AG04449 (cell line): ENCODE measurements at regions of chr10 and their contacts with region 1.

Region 1: GRCh38 chr10:23994479-23995046 is 214.4 kb upstream of the KIAA1217 start:
- DNase-seq: peak; percentile 7
- H3K4me3 ChIP-seq: no peak overlapping the region
- CTCF ChIP-seq: peak; percentile 86

Region 2: GRCh38 chr10:23981520-23982309 is 12.8 kb before region 1 on chr10:
- CTCF ChIA-PET with region 1: interaction called, 20 read pairs
- POLR2A ChIA-PET with region 1: no interaction called
- DNase-seq: no peak
- H3K4me3 ChIP-seq: no peak overlapping the region
- CTCF ChIP-seq: no peak

Region 3: DNA sequence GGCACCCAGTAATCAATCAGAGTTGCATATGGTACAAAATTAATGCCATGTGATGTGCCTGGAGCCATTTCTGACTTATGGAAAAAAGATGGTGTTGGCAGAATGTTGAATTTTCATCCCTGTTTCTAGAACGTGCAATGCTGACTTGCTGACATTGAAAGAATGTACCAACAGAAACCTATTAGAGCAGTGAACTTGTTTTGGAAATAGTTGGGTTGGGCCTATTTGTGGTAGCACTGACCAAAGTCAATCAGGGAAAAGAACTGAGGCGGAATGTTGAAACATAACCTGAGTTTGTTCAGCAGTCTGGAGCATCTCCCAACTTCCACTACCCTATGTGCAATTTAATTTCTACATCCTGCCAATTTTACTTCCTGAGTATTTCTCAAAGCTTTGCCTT is 202.7 kb after region 1 on chr10:
- CTCF ChIA-PET with region 1: interaction called, 89 read pairs
- POLR2A ChIA-PET with region 1: no interaction called
- DNase-seq: no peak
- H3K4me3 ChIP-seq: no peak overlapping the region
- CTCF ChIP-seq: no peak

Region 4: DNA sequence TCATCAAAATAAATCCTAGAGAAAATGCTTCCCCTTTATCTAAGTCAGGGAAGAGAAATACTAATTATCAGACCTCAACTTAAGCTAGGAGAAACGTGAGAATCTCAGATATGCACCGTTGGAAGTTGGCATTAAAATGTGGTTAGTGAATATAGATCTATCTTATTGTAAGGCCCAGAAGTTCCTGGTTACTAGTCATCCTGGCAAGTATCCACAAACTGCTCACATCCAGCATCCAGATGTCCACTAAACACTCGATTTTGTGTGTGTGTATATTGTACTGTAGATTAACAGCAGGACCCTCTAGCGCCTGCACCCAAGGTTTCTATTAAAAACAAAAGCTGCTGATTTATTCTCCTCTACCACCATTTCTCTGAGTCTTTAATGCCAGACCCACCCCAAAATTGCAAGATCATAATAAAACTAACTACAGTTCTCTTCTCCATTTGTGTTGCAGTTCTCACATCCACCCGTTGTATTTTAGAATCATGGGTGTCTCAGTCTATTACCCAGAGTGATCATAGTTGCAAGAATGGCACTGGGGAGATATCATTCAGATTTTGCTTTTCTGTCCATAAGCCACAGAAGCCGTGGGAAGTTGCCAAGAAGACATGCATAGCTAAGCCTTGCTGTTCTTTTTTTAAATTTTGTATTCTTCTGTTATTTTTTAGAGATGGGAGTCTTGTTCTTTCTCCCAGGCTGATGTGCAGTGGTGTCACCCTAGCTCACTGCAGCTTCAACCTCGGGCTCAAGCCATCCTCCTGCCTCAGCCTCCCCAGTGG is 379.8 kb after region 1 on chr10:
- CTCF ChIA-PET with region 1: interaction called, 12 read pairs
- POLR2A ChIA-PET with region 1: no interaction called
- DNase-seq: peak; percentile 71
- H3K4me3 ChIP-seq: no peak overlapping the region
- CTCF ChIP-seq: no peak

Region 5: GRCh38 chr10:24503461-24504320 is 509.1 kb after region 1 on chr10:
- CTCF ChIA-PET with region 1: interaction called, 45 read pairs
- POLR2A ChIA-PET with region 1: no interaction called
- DNase-seq: no peak
- H3K4me3 ChIP-seq: no peak overlapping the region
- CTCF ChIP-seq: peak; percentile 49

Region 6: GRCh38 chr10:24528946-24529345 is 534.4 kb after region 1 on chr10:
- CTCF ChIA-PET with region 1: interaction called, 11 read pairs
- POLR2A ChIA-PET with region 1: no interaction called
- DNase-seq: no peak
- H3K4me3 ChIP-seq: no peak overlapping the region
- CTCF ChIP-seq: no peak